CD8-positive, alpha-beta T cell (primary cell): ENCODE measurements at regions of chr16 and their contacts with region 1.

Region 1: DNA sequence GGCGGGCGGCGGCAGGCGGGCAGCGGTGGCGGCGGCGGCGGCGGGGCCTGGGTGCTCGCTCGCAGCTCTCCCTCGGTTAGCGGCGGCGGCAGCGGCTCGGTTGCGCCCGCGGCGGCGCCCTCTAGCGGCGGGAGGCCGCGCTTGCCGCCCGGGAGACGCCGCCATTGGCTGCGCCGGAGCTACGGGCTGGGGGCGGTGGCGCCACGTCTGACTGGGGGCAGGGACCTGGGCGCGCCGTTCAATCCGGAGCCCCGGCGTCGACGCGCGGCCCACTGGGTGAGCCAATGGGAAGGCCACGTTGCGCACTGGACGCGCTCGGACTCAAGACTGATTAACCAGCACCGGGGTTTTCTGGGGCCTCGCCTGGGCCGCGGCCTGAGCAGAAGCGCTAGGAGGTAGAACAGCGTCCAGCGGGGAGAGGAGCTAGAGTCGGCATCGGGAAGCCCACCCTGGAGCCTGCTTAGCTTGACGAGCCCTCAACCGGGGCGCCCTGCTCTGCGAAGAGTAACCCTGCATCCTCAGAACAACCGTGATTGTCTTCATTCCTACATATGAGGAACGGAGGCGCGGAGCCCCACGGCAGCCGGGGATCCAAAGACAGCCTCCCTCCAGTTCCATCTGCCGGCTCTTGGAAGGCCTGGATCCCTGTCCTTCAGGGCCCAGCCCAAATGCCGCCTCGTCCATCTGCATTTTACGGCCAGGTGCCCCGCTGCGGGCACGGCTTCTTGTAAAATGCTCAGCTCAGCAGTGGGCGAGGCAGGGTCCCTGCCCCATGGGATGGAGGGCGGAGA is at the start of gene ZC3H7A:
- DNase-seq: peak; percentile 83 to 97 (median 92)
- ATAC-seq: peak; percentile 94
- H3K4me3 ChIP-seq: peak within 1 kb of the TSS; percentile 71 to 97
- H3K4me3 Mint-ChIP-seq: peak within 1 kb of the TSS; percentile 95
- H3K27ac ChIP-seq: peak within 1 kb of the TSS; percentile 82 to 99
- H3K27ac Mint-ChIP-seq: peak within 1 kb of the TSS; percentile 99
- H3K4me1 ChIP-seq: peaks cover 72% of the 10 kb centered on the region
- H3K4me1 Mint-ChIP-seq: peaks cover 68% of the 10 kb centered on the region
- H3K27me3 ChIP-seq: no peaks in the 10 kb centered on the region
- H3K27me3 Mint-ChIP-seq: no peaks in the 10 kb centered on the region
- CTCF ChIP-seq: peak; percentile 79
- total RNA-seq, gene ZC3H7A: 105 to 106 TPM

Region 2: DNA sequence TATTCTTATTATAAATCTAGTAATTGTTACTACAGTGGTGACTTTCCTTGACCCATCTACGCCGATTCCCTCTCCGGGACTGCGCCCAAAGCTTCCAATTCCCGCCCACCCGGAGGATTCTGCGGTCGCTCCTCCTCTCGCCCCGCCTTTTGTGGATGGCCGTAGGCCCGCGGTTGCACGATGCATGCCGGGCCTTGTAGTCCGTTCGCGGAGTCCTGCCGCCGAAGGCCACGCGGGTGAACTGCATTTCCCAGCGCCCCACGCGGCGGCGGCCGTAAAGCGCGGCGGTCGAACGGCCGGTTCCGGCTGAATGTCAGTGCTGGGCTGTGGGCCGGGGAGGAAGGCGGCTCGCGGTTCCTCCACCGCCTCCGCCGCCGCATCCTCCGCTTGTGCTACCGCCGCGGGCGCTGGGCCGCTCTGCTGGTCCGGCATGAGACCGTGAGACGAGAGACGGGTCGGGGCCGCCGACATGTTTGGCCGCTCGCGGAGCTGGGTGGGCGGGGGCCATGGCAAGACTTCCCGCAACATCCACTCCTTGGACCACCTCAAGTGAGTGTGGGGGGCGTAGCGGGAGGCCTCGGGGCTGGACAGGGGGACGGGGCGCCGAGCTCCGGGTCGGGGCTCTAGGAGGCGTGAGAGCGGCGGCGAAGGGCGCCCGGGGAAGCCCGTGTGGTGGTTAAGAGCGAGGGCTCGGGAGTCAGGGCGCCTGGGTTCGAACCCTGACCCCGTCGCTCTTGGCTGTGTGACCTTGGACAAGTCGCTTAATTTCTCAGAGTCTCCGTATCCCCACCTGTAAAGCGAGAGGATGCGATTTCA is 852.9 kb before region 1 on chr16 and contains the start of gene CLEC16A:
- CTCF ChIA-PET with region 1: no interaction called
- POLR2A ChIA-PET with region 1: no interaction called
- intact Hi-C with region 1: loop called (anchors 1 to 5 kb)
- DNase-seq: peak; percentile 91 to 98 (median 93)
- ATAC-seq: peak; percentile 70
- H3K4me3 ChIP-seq: peak within 1 kb of the TSS; percentile 66 to 76
- H3K4me3 Mint-ChIP-seq: peak within 1 kb of the TSS; percentile 93
- H3K27ac ChIP-seq: peak within 1 kb of the TSS; percentile 38 to 65
- H3K27ac Mint-ChIP-seq: peak within 1 kb of the TSS; percentile 82
- H3K4me1 ChIP-seq: peaks cover 60% of the 10 kb centered on the region
- H3K4me1 Mint-ChIP-seq: peaks cover 71% of the 10 kb centered on the region
- H3K27me3 ChIP-seq: no peaks in the 10 kb centered on the region
- H3K27me3 Mint-ChIP-seq: no peaks in the 10 kb centered on the region
- CTCF ChIP-seq: no peak
- total RNA-seq, gene CLEC16A: 20.5 to 21.9 TPM

Region 3: DNA sequence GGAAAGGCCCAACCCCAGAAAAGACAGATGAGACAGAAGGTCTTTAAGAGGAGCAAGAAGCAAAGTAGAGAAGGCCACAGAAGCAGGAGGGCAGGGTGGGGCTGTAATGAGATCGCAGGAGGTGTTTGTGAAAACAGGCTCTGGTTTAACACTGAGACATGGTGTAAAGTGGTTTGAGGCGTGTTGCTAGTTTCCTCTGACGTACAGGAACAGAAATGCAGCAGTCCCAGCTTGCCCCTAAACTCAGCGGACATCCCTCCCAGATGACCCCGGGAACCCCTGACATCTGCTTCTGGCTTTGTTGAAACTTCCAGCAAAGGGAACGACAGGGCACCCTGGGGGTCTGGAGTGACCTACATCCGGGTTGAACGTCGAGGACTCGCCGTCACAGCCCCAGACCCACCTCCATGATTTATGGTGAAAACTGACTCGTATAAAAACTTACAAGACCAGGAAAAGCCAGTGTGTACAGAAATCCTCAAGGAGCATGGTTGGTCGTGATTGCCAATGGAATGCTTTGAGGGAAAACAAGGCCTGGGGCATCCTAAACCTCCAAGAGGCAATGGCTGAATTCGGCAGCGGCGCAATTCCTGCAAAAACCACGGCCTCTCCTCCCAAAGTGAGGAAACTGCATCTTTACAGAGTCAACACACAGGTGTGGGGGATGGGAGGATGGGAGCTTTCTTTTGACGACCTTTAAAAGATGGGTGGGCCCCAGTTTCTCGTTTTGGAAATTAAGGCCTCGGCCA is 236.5 kb before region 1 on chr16:
- CTCF ChIA-PET with region 1: no interaction called
- POLR2A ChIA-PET with region 1: interaction called, 3 read pairs
- intact Hi-C with region 1: loop called in 1 of 2 experiments (anchors 2 kb)
- DNase-seq: peak; percentile 55 to 97 (median 76)
- ATAC-seq: peak; percentile 82
- H3K4me3 ChIP-seq: peak overlapping the region; percentile 42 to 56
- H3K4me3 Mint-ChIP-seq: peak overlapping the region; percentile 83
- H3K27ac ChIP-seq: peak overlapping the region; percentile 90 to 97
- H3K27ac Mint-ChIP-seq: peak overlapping the region; percentile 99
- H3K4me1 ChIP-seq: peaks cover 83% of the 10 kb centered on the region
- H3K4me1 Mint-ChIP-seq: peaks cover 84% of the 10 kb centered on the region
- H3K27me3 ChIP-seq: no peaks in the 10 kb centered on the region
- H3K27me3 Mint-ChIP-seq: no peaks in the 10 kb centered on the region
- CTCF ChIP-seq: no peak

Region 4: DNA sequence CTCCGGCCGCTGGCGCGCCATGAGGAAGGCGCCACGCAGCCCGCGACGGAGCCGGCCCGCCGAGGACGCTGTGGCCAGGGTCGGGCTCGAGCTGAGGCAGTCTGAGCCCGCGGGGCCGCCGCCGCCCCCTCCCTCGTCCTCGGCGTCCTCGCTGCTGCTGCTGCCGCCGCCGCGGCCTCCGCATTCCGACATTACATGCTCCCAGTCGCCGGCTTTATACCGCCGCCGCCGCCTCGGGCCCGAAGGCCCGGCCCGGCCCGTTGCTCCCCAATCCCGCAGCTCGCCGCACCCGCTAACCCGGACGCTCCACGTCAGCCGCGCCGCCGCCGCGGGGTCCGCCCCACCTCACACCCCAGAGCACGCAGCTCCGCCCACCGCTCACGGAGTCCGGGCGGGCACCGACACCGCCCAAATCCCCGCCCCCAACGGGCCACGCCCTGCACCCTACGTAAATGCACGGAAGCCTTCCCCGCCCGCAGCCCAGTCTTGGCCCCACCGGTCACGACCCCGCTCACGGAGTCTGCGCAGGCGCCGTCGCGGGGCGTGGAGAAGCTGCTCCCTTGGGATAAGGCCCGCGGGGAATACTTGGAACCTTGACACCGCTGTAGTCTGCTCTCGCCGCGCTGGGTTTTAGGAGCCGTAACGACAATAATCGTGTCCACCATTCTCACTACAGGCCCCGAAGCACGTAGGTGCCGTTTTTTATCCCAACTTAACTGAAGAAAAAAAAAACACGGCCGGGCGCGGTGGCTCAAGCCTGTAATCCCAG is 54.6 kb before region 1 on chr16 and contains the start of gene TXNDC11:
- CTCF ChIA-PET with region 1: interaction called, 10 read pairs
- POLR2A ChIA-PET with region 1: interaction called, 36 read pairs
- intact Hi-C with region 1: loop called (anchors 1 kb)
- DNase-seq: peak; percentile 99 to 100 (median 99)
- ATAC-seq: peak; percentile 96
- H3K4me3 ChIP-seq: peak within 1 kb of the TSS; percentile 63 to 78
- H3K4me3 Mint-ChIP-seq: peak within 1 kb of the TSS; percentile 95
- H3K27ac ChIP-seq: peak within 1 kb of the TSS; percentile 79 to 95
- H3K27ac Mint-ChIP-seq: peak within 1 kb of the TSS; percentile 98
- H3K4me1 ChIP-seq: peaks cover 30% of the 10 kb centered on the region
- H3K4me1 Mint-ChIP-seq: peaks cover 48% of the 10 kb centered on the region
- H3K27me3 ChIP-seq: no peaks in the 10 kb centered on the region
- H3K27me3 Mint-ChIP-seq: no peaks in the 10 kb centered on the region
- CTCF ChIP-seq: no peak
- total RNA-seq, gene TXNDC11: 118 to 130 TPM

Region 5: DNA sequence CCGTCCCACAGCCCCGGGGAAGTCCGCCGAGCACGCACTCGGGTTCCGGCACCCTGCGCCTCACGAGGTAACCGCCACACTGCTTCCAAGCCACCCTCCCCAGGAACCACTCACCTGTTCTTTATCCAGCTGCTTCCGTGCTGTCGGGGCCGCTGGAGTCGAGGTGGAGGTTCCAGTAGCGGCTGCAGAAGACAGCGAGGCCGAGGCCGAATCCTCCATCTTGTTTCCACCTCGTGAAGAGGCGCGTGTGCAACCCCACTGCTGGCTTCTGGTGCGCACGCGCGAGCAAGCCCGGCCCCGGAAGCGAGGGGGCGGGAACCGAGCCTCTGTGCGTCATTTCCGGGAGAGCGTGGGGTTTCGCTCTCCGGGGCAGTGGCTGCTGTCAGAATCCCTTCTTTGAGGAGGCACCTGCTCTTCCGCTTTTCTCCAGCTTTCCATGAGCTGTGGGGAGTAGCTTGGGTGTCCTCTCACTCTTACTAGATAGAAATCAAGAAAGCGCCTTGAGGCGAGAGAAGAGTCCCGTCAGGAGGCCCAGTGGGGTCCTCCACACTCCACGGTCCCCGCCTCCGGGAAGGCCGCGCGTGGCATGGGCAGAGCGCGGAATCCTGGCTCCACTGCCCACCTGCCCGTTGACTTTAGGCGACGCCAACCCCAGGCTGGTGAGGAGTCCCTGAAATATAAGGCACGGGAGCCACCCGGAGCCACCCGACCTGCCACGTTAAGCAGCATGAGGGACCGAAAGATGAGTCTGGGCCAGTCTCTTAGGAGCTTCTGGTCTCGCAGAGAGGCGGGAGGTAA is 54.1 kb after region 1 on chr16 and contains the start of gene RSL1D1:
- CTCF ChIA-PET with region 1: no interaction called
- POLR2A ChIA-PET with region 1: interaction called, 3 read pairs
- intact Hi-C with region 1: loop called (anchors 1 kb)
- DNase-seq: peak; percentile 89 to 98 (median 93)
- ATAC-seq: peak; percentile 79
- H3K4me3 ChIP-seq: peak within 1 kb of the TSS; percentile 99
- H3K4me3 Mint-ChIP-seq: peak within 1 kb of the TSS; percentile 93
- H3K27ac ChIP-seq: peak within 1 kb of the TSS; percentile 92 to 95
- H3K27ac Mint-ChIP-seq: peak within 1 kb of the TSS; percentile 96
- H3K4me1 ChIP-seq: peaks cover 48% of the 10 kb centered on the region
- H3K4me1 Mint-ChIP-seq: peaks cover 57% of the 10 kb centered on the region
- H3K27me3 ChIP-seq: no peaks in the 10 kb centered on the region
- H3K27me3 Mint-ChIP-seq: no peaks in the 10 kb centered on the region
- CTCF ChIP-seq: no peak
- total RNA-seq, gene RSL1D1: 235 to 242 TPM

Region 6: GRCh38 chr16:11977376-11978041 is 180.1 kb after region 1 on chr16:
- CTCF ChIA-PET with region 1: no interaction called
- POLR2A ChIA-PET with region 1: no interaction called
- intact Hi-C with region 1: loop called in 1 of 2 experiments (anchors 5 kb)
- DNase-seq: no peak
- ATAC-seq: no peak
- H3K4me3 ChIP-seq: peak overlapping the region; percentile 65 to 81
- H3K4me3 Mint-ChIP-seq: peak overlapping the region; percentile 91
- H3K27ac ChIP-seq: no peak overlapping the region
- H3K27ac Mint-ChIP-seq: peak overlapping the region; percentile 89
- H3K4me1 ChIP-seq: peaks cover 16% of the 10 kb centered on the region
- H3K4me1 Mint-ChIP-seq: peaks cover 42% of the 10 kb centered on the region
- H3K27me3 ChIP-seq: no peaks in the 10 kb centered on the region
- H3K27me3 Mint-ChIP-seq: no peaks in the 10 kb centered on the region
- CTCF ChIP-seq: no peak